ENCODE measurements at regions of chr16 and their contacts with region 1.

Region 1: DNA sequence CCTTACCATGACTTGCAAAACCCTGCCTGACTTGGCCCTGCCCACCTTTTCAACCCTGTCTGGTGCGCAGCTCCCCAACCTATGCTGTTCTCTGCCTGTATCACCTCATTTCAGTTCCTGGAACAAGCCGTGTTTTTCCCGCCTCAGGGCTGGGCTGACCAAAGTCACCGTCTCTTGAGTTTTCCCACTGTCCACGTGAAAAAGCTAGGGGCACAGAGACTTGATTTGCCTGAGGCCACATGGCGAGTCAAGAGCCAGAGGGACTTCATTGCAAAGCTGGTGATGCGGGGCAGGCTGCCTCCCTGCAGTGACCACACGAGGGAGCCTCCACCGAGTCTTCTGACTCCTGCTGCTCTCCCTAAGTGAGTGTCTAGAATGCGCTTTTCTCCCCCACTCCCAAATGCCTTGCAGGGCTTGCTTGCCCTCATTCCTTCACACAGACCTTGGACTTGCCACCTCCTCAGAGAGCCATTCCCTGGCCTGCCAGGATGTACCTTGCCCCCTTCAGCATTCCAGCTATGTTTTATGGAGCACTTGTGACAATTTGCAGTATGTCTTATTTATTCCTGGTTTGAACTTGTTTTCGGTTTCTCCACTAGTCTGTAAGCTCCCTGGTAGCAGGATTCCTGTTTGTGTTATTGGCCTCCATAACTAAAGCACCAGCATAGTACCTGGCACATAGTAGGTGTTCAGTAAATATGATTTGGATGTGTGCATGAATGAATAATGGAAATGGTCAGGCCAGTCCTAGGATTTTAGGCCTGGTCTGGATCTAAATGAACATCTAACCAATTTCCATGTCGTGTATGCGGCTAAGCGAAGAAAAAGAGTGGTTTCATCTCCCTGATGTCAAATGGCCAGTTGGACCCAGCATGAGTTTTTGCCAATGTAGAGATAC is 252.3 kb downstream of the SNX29 start:
- DNase-seq: peak; percentile 25
- ATAC-seq: peak; percentile 99
- H3K4me3 ChIP-seq: no peak overlapping the region
- H3K27ac ChIP-seq: no peak overlapping the region
- H3K4me1 ChIP-seq: no peaks in the 10 kb centered on the region
- H3K27me3 ChIP-seq: no peaks in the 10 kb centered on the region
- CTCF ChIP-seq: peak; percentile 90

Region 2: GRCh38 chr16:11063448-11064201 is 1165.2 kb before region 1 on chr16:
- CTCF ChIA-PET with region 1: no interaction called
- POLR2A ChIA-PET with region 1: interaction called, 16 read pairs
- in situ Hi-C with region 1: no loop called
- intact Hi-C with region 1: no loop called
- DNase-seq: no peak
- ATAC-seq: no peak
- H3K4me3 ChIP-seq: no peak overlapping the region
- H3K27ac ChIP-seq: no peak overlapping the region
- H3K4me1 ChIP-seq: no peaks in the 10 kb centered on the region
- H3K27me3 ChIP-seq: no peaks in the 10 kb centered on the region
- CTCF ChIP-seq: no peak

Region 3: DNA sequence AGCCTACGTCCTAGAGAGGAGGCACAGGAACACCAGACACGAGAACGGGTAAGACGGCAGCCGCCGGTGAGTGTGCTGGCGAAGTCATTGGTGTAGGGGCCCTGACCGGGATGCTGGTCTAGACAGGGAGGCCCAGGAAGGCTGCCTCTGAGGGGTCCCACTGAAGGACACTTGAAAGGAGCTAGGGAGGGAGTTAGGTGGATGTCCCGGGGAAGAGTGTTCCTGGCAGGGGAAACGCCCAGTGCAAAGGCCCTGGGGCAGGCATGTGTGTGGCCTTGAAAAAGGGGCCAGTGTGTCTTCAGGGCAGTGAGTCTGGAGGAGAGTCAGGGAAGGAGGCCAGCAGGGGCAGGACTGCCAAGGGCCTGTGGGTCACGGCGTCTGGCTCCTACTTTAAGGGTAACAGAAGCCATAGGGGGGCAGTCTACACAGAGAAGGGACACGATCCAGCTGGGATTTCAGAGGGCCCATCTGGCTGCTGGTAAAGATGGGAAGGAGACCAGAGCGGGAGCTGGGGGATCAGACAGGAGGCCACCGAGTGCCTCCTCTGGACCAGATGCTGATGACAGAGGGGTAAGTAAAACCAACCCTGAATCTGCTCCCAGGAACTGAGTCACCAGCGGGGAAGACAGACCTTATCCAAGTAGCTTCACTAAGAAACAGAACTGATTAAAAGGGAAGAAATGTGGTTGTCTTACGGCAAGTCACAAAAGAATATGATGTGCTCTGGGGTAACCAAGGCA is 758.0 kb before region 1 on chr16:
- CTCF ChIA-PET with region 1: no interaction called
- POLR2A ChIA-PET with region 1: no interaction called
- in situ Hi-C with region 1: no loop called
- intact Hi-C with region 1: no loop called
- DNase-seq: no peak
- ATAC-seq: peak; percentile 35
- H3K4me3 ChIP-seq: no peak overlapping the region
- H3K27ac ChIP-seq: no peak overlapping the region
- H3K4me1 ChIP-seq: no peaks in the 10 kb centered on the region
- H3K27me3 ChIP-seq: no peaks in the 10 kb centered on the region
- CTCF ChIP-seq: no peak

Measured in Panc1 (cell line).